ENCODE measurements at regions of chr3 and their contacts with region 1.

Region 1: GRCh38 chr3:123559040-123559861 is 25.6 kb downstream of the HACD2 start:
- DNase-seq: no peak

Region 2: DNA sequence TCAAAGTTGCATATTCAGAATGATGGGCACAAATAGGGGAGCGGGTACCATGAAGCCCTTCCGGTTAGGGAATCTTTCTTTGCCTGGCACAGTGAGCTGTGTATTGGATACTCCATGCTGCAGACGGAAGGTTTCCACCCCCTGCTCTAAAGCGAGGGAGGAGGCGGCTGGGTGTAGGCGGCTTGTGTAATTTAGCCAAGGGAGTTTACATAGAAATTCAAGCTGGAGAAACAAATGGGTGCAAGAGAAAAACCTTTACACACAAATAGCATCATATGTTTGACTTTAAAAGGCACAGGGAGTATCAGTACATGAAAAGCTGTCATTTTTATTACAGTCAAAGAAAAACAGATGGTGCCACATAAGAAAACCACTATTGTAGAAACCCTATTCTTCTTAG is 51.1 kb before region 1 on chr3:
- intact Hi-C with region 1: loop called (anchors 10 kb)
- DNase-seq: peak in 7 of 10 donors; percentile 21 to 91 (median 46)

Measured in posterior cingulate gyrus (tissue), 11 donors.